Activated naive CD4-positive, alpha-beta T cell treated with anti-CD3 and anti-CD28 coated beads, Interleukin-2, amount 10 ng/mL, durations not matched to agents 7 days and 5 days (primary cell): ENCODE measurements at regions of chr6 and their contacts with region 1.

Region 1: DNA sequence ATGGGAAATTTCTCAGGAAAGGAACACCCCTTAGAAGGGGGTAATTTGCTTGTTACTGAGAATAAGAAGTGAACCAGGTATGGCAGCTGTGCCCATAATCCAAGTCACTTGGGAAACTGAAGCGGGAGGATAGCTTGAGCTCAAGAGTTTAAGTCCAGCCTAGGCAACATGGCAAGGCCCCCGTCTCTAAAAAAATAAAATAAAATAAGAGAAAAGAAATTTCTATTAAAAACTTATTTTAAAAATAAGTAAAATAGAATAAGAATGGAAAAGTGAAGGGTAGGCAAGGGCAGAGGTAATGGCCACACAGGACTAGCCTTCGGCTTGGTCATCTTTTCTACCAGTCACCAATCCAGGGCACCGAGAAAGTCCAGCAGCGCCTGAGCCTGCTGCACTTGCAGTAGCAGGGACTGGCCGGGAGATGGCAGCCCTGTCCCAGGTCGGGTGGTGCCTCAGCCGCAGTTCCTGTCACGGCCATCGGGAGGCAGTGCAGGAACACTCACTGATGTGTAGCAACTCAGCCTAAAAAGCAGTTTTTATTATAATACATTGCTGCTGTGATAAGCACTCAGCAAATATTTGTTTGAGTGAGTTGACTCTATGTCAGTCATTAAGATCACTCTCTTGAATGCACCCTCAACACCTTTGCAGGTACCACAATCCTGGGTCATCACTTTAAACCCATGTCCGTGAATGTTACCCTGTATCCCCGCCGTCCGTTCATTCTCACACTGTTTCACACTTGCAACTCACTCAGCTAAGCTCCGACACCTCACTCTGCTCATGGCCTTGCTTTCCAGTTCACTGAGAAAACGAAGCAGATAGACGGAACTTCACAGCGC is 23.2 kb upstream of the GCM1 start:
- DNase-seq: peak; percentile 91
- H3K4me3 Mint-ChIP-seq: no peak overlapping the region
- H3K27ac Mint-ChIP-seq: no peak overlapping the region
- H3K4me1 Mint-ChIP-seq: no peaks in the 10 kb centered on the region
- H3K27me3 Mint-ChIP-seq: peaks cover 8% of the 10 kb centered on the region

Region 2: GRCh38 chr6:53134601-53135235 is 37.1 kb before region 1 on chr6:
- CTCF ChIA-PET with region 1: no interaction called
- DNase-seq: no peak
- H3K4me3 Mint-ChIP-seq: no peak overlapping the region
- H3K27ac Mint-ChIP-seq: no peak overlapping the region
- H3K4me1 Mint-ChIP-seq: no peaks in the 10 kb centered on the region
- H3K27me3 Mint-ChIP-seq: peaks cover 26% of the 10 kb centered on the region

Region 3: DNA sequence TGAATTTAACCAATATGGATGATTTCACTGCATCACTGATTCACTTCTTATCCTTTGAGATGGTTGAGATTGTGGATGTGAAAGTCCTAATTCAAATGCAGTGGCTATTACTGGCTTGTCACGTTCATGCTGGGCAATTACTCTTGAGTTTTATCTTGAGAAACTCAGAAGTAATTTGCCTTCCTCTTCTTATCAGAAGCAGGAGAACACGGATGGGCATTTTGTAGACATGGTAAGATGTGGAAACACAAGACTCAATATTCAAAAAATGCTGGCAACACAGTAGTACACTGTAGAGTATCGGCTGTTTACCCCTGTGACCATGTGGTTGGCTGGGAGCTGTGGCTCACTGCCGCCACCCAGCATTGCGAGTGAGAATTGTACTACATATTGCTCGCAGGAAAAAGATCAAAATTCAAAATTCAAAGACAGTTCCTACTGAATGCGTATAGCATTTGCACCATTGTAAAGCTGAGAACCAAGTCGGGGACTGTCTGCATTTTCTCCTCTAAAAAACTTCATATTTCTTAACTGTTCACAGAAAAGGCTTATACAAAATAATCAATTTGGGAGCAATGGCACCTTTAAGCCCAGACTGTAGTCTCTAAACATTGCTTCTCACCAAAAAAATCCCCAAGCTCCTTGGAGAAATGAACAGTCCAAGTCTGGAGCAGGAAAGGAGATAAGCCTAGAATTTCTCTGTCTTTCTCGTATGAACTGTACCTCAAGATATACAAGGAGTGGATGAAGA is 238.9 kb after region 1 on chr6:
- CTCF ChIA-PET with region 1: interaction called, 57 read pairs
- DNase-seq: peak; percentile 68
- H3K4me3 Mint-ChIP-seq: no peak overlapping the region
- H3K27ac Mint-ChIP-seq: no peak overlapping the region
- H3K4me1 Mint-ChIP-seq: no peaks in the 10 kb centered on the region
- H3K27me3 Mint-ChIP-seq: no peaks in the 10 kb centered on the region

Region 4: DNA sequence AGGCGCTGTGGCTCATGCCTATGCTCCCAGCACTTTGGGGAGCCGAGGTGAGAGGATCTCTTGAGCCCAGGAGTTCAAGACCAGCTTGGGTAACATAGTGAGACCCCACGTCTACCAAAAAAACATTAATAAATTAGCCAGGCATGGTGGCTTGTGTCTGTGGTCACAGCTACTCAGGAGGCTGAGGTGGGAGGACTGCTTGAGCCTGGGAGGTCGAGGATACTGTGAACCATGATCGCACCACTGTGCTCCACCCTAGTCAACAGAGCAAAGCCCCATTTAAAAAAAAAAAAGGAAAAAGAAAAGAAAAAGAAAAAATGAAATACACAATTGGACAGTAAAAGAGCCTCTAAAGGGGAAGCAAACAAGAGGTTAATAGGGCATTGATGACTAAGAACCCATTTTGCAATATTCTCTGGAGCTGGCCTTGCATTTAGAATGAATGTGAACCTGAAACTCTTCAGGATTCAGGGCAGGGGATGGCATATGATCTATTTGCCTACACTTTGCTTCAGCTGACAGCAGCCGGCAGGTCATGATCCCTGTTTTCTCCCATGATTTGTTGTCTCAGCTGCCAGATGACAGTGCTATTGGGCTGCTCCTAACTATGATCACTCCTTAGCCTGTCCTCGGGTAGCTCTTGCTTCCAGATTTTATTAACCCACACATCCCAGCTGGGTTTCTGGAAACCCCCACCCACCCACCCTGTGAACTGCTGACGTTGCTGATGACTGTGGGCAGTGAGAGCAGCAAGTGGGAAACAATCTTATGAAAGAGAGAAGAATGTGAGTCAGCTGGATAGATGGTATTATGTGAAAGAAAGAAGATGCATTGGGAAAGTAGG is 260.7 kb after region 1 on chr6:
- CTCF ChIA-PET with region 1: interaction called, 44 read pairs
- DNase-seq: no peak
- H3K4me3 Mint-ChIP-seq: no peak overlapping the region
- H3K27ac Mint-ChIP-seq: no peak overlapping the region
- H3K4me1 Mint-ChIP-seq: peaks cover 6% of the 10 kb centered on the region
- H3K27me3 Mint-ChIP-seq: no peaks in the 10 kb centered on the region

Region 5: DNA sequence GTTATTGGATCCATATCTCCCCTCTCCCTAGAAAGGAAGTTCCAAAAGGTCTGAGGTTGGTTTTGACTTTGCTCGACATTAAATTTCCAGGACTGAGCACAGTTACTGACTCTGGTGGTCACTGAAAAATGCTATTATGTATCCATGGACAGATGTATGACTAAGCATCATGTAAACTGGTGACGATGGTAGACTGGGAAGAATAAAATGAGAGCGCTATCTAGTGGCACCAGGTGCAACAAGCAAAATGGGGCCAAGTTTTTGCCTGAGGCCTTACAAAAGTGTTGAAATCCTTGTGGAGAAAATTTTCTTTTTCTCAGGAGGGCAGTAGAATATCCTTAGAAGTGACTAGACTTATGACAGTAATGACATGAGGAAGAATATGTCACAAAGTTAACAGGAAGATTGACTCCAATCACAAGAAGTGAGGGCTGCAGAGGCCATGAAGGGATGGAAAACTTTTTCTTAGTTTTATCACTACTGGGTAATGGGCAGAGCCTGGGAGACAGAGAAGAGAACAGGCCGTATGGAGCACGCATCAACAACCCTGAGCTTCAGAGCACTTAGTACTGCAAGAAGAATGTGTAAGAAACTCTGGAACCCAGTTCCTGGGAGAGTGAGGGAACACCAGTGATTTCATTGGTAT is 265.9 kb after region 1 on chr6:
- CTCF ChIA-PET with region 1: interaction called, 44 read pairs
- DNase-seq: peak; percentile 38
- H3K4me3 Mint-ChIP-seq: no peak overlapping the region
- H3K27ac Mint-ChIP-seq: no peak overlapping the region
- H3K4me1 Mint-ChIP-seq: no peaks in the 10 kb centered on the region
- H3K27me3 Mint-ChIP-seq: peaks cover 4% of the 10 kb centered on the region

Region 6: DNA sequence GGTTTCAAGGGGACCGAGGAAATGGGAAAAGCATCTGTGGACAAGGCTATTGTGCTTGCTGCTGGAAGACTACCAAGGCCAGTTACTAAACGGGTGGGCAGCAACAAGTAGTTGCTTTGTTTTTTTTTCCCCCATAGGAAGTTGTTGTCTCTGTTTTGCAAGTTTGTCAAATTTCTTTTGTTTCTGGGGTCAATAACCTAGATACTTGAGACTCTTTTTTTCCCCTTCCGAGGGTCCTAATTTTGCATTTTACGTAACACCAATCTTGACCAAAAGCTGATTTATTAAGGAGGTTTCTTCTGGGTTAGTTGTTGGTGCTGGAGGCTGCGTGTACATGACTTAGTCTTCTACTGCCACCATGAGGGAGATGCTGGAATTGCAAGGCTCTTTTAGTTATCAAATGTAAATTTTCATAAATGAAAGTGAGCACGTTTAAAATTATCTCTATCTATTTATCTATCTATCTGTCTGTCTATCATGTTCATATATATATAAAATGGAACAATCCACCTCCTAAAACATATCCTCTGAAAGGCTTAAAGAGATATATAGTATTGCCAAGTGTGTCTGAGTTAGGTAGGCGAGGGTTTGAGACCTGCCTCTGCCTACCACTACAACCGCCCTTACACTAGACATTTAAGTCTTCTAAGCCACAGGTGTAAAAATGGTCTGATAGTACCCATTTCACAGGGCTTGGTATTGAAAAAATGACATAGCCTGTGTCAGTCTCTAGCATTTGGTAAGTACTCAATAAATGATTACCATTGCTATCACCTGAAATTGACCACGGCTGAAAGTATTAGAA is 312.9 kb after region 1 on chr6:
- CTCF ChIA-PET with region 1: interaction called, 105 read pairs
- DNase-seq: peak; percentile 81
- H3K4me3 Mint-ChIP-seq: no peak overlapping the region
- H3K27ac Mint-ChIP-seq: no peak overlapping the region
- H3K4me1 Mint-ChIP-seq: peaks cover 14% of the 10 kb centered on the region
- H3K27me3 Mint-ChIP-seq: peaks cover 33% of the 10 kb centered on the region

Region 7: DNA sequence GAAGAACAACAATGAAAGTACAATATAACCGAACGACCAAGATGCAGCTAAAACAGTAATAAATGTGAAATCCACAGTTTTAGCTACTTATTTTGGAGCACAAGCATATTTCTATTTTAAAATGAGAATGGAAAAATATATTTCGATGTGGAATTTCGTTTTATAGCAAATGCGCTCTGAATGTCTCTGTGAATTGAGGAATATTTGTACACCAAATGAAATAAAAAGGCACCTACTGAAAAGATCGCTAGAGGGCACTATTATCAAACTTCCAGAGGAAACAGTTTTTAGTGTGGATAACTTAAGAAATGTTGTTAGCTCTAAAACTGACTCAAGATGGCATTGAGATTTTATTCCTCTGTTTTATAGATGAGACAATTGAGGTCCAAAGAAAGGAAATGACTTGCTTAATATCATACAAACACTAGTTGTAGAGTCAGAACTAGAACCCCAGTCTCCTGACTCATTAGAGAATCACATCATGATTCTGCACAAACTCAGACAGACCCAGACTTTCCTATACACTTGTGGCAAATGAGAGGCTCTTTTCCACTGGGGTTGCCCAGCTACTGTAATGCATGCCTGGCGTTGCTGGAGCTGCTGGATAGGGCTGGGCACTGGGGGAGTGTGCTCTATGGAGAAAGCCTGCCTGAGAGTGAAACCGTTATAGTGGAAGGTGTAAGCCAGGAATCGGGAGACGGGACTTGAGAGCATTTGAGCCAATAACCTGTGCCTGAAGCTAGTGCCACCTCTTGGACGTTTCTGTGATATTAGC is 321.2 kb after region 1 on chr6:
- CTCF ChIA-PET with region 1: interaction called, 12 read pairs
- DNase-seq: no peak
- H3K4me3 Mint-ChIP-seq: no peak overlapping the region
- H3K27ac Mint-ChIP-seq: no peak overlapping the region
- H3K4me1 Mint-ChIP-seq: peaks cover 2% of the 10 kb centered on the region
- H3K27me3 Mint-ChIP-seq: peaks cover 16% of the 10 kb centered on the region